Activated CD4-positive, alpha-beta memory T cell treated with anti-CD3 and anti-CD28 coated beads for 36 hours (primary cell): ENCODE measurements at regions of chr10 and their contacts with region 1.

Region 1: DNA sequence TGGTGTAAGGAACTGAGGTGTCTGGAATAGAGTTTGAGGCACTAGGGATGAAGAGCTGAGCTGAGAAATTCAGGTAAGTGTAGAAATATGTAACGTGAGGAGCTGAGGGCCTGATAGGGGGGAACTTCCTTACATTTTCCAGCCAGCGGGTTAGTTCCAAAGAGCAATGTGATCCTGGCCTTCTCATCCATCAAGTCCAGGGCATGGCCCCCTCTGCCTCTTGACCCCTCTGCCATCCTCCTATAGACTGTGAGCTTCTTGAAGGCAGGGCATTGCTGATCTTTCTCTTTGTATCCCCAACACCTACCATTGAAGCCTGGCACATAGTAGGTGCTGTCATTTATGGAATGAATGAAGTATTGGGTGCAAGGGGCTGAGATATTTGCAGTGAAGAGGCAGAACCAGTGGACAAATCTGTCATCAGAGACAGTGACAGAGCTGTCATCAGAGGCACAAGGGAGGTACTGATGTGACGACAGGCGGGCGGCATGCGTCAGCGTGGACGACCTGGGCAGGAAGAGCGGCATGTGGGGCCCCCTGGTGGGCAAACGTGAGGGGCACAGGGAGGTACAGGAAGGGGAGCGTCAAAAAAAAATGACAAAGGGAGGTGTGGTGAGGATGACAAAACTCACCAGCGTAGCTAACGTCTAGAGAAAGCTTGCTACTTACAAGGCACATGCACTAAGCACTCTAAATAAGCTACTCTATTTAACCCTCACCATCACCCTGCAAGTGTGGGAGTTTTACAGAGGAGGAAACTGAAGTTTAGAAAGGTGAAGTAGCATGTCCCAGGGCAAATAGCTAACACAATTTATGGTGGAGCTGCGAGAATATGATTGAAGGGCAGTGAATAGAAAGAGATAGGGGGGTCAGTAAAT is 5.2 kb upstream of the CAMK2G start:
- DNase-seq: peak; percentile 97
- H3K4me3 Mint-ChIP-seq: peak overlapping the region; percentile 6
- H3K27ac Mint-ChIP-seq: no peak overlapping the region
- H3K4me1 Mint-ChIP-seq: peaks cover 27% of the 10 kb centered on the region
- H3K27me3 Mint-ChIP-seq: no peaks in the 10 kb centered on the region

Region 2: DNA sequence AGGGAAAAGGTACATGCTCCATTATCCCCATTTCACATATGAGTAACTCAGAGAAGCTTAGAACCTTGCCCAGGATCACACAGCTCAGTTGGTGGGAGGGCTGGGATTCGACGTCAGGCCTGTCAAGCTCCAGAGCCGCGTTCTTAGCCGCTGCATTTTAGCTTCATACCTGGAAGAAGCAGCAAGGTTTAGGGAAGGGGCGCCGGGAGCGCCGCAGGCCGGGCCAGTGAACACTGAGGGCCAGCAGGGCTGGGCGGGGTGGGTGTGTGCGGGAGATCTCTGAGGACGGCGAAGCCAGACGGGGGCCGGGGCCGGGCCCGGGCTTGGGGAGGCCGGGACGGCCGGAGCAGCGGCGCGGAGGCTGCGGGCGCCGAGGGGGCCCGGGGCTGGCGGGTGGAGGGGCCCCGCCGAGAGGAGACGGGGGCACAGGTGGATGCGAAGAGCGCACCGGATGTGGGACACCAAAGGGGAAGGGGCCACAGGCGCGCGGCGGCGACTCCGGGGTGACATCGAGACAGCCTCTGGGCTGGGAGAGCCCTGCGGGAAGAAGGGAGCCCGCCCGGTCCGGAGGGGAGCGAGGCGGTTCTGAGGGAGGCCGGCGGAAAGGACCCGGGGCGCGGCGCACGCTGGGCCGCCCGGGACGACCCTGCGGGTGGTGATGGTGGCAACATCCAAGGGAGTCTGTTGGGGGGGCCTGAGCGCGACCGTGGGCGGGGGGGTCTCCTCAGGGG is 68.6 kb before region 1 on chr10:
- CTCF ChIA-PET with region 1: interaction called, 22 read pairs
- POLR2A ChIA-PET with region 1: no interaction called
- intact Hi-C with region 1: loop called (anchors 2 kb)
- DNase-seq: peak; percentile 68
- H3K4me3 Mint-ChIP-seq: peak overlapping the region; percentile 85
- H3K27ac Mint-ChIP-seq: peak overlapping the region; percentile 95
- H3K4me1 Mint-ChIP-seq: peaks cover 41% of the 10 kb centered on the region
- H3K27me3 Mint-ChIP-seq: no peaks in the 10 kb centered on the region

Region 3: GRCh38 chr10:73848821-73849489 is 30.6 kb before region 1 on chr10:
- CTCF ChIA-PET with region 1: interaction called, 486 read pairs
- POLR2A ChIA-PET with region 1: interaction called, 4 read pairs
- intact Hi-C with region 1: loop called (anchors 1 kb)
- DNase-seq: peak; percentile 94
- H3K4me3 Mint-ChIP-seq: peak overlapping the region; percentile 23
- H3K27ac Mint-ChIP-seq: peak overlapping the region; percentile 74
- H3K4me1 Mint-ChIP-seq: peaks cover 11% of the 10 kb centered on the region
- H3K27me3 Mint-ChIP-seq: no peaks in the 10 kb centered on the region

Region 4: DNA sequence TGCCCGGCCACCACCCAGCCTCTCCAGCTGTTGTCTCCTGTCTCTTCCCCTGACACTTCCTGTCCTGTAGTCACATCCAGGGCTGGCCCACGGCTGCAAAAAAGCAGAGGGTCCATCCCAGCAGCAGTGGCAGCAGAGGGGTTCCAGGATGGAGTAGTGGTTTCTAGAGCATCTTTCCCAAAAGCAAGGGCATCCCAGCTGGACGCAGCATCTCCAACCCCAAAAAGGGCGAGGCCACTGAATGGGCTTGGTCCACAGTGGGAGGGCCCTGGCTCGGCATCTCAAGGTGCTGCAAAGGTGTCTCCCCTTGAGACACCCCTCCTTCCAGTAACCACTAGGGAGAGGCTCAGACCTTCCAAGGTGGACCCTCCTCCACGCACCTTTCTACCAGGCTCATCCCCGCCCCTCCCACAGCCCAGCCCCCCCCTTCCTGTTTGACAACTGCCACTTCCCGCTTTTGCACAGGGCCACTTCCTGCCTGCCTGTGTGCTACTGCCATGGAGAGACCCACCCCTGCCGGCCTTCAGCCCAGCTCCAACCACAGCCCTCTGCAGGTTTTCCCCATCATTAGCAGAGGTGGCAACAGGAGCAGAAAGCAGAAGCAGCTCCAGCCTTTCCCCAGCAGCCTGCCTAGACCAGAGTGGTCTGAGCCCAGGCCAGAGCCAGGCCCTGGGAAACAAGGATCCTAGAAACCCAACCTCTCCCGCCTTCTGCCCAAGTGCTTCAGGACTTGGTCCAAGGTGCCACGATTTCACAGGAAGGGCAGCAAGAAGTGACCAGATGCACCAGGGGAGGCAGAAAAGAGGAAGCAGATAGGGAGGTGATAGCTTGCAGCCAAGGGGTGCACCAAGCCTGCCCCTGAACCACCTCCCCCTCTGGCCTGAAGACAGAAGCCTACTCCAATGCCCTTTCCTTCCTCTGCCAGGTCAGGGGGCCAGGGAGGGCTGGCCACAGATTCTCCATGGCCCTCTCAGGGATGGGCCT is 13.8 kb before region 1 on chr10:
- CTCF ChIA-PET with region 1: interaction called, 41 read pairs
- POLR2A ChIA-PET with region 1: interaction called, 7 read pairs
- intact Hi-C with region 1: loop called (anchors 1 kb)
- DNase-seq: peak; percentile 77
- H3K4me3 Mint-ChIP-seq: peak overlapping the region; percentile 79
- H3K27ac Mint-ChIP-seq: peak overlapping the region; percentile 99
- H3K4me1 Mint-ChIP-seq: peaks cover 64% of the 10 kb centered on the region
- H3K27me3 Mint-ChIP-seq: no peaks in the 10 kb centered on the region

Region 5: DNA sequence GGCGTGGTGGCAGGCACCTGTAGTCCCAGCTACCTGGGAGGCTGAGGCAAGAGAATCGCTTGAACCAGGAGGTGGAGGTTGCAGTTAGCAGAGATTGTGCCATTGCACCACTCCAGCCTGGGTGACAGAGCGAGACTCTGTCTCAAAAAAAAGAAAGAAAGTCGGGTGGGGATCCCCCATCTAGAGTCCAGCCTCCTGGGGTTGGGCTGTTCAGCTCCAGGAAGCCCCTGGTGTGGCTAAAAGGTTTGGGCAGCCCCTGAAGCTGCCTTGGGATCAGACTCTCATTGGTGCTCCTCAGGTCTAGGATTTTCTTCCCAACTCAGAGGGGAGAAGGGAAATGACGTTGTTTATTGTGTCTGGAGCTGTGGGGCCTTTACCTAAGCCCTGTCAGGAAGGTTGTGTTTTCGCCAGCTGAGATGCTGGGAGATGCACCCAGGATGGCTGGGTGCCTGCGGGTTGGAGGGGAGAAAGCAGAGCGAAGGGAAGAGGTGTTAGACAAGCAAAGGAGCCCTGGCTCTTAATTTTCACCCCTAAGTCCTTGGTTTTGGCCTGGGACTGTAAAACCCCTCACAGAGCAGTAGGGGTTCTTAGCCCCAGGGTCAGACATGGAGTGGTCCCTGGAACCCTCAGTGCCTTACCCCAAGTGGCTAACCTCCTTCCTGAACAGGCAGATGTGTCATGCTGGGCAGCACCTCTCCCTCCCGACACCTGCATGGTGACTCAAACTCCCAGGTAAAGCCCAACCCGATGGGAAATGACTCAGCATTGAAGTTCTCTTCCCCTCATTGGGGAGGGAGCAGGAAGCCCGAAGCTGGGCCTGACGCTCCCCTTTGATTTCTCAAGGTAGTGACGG is 52.5 kb after region 1 on chr10:
- CTCF ChIA-PET with region 1: interaction called, 148 read pairs
- POLR2A ChIA-PET with region 1: no interaction called
- intact Hi-C with region 1: no loop called
- DNase-seq: peak; percentile 84
- H3K4me3 Mint-ChIP-seq: no peak overlapping the region
- H3K27ac Mint-ChIP-seq: peak overlapping the region; percentile 69
- H3K4me1 Mint-ChIP-seq: peaks cover 15% of the 10 kb centered on the region
- H3K27me3 Mint-ChIP-seq: no peaks in the 10 kb centered on the region